CD8-positive, alpha-beta T cell (primary cell): ENCODE measurements at regions of chr15 and their contacts with region 1.

Region 1: DNA sequence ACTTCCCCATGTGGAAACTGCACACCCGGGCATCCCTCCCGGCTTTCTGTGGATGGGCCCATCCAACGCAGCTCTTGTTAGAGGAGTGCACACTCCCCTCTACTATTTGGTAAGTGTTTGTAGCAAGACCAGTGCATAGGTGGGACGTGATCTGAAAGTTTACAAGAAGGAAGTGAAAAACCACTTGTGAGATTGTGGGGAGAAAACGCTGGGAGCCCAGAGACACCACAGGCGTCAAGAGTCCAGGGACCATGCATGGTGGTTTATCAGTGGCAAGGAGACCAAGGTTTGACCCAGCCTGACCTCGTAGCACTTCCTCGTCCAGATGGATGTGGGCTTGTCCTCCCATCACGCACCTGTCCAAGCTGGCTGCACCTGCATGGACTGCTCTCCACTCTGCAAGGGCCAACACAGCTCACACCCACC is 51.6 kb downstream of the ATP10A start:
- DNase-seq: peak in 3 of 9 experiments; percentile 30 to 64 (median 44)
- ATAC-seq: peak; percentile 32
- H3K4me3 ChIP-seq: peak overlapping the region; percentile 13 to 27
- H3K4me3 Mint-ChIP-seq: peak overlapping the region; percentile 63
- H3K27ac ChIP-seq: peak overlapping the region in 1 of 2 experiments; percentile 39
- H3K27ac Mint-ChIP-seq: peak overlapping the region; percentile 77
- H3K4me1 ChIP-seq: peaks cover 52% of the 10 kb centered on the region
- H3K4me1 Mint-ChIP-seq: peaks cover 62% of the 10 kb centered on the region
- H3K27me3 ChIP-seq: no peaks in the 10 kb centered on the region
- H3K27me3 Mint-ChIP-seq: no peaks in the 10 kb centered on the region
- CTCF ChIP-seq: no peak

Region 2: DNA sequence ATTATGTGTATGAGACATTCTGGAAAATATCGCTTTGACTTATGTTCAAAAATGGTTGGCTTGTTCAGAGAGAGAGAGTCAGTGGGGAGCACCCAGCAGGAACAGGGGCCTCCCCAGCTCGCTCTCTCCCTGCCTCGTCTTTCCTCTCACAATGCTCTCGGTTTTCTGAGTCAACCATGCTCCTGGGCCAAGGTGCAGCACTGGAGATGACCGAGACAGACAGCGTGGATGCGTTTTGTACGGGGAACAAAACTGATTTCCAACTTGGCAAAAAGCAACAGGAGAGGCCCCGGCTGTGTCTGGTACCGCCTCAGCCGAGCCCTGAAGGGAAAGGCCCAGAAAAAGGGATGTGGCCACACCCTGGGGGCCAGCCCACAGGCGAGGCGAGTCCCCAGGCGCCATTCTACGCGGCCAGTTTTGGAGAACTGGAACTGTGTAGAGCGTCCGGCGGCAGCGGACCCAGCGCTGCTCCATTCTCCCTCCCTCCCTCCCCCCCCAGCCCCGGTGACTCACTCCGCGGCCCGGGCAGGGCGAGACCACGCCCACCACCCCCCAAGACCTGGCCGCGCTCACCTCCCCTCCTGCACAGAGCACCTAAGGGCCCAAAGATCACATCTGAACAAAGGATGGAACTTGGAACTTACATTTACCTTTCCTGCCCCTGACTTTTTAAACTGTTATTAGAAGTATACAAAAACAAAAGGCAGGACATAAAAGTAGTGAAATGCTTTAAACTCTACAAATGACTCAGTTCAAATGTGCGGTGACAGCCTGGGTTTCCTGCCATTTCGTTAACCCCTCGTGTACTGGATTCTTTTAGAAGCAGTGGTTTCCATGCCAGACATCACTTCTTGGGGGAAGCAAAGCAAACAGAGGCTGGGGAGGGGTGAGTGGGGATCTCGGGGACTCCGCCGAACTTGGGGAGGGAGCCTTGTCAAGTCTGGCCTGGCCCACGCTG is 38.9 kb after region 1 on chr15:
- CTCF ChIA-PET with region 1: no interaction called
- POLR2A ChIA-PET with region 1: interaction called, 3 read pairs
- intact Hi-C with region 1: loop called (anchors 5 kb)
- DNase-seq: peak in 8 of 9 experiments; percentile 63 to 86 (median 74)
- ATAC-seq: peak; percentile 54
- H3K4me3 ChIP-seq: peak overlapping the region; percentile 45 to 53
- H3K4me3 Mint-ChIP-seq: peak overlapping the region; percentile 91
- H3K27ac ChIP-seq: peak overlapping the region; percentile 72 to 88
- H3K27ac Mint-ChIP-seq: peak overlapping the region; percentile 98
- H3K4me1 ChIP-seq: peaks cover 80% of the 10 kb centered on the region
- H3K4me1 Mint-ChIP-seq: peaks cover 86% of the 10 kb centered on the region
- H3K27me3 ChIP-seq: no peaks in the 10 kb centered on the region
- H3K27me3 Mint-ChIP-seq: no peaks in the 10 kb centered on the region
- CTCF ChIP-seq: no peak

Region 3: GRCh38 chr15:26294059-26294689 is 482.7 kb after region 1 on chr15:
- CTCF ChIA-PET with region 1: no interaction called
- POLR2A ChIA-PET with region 1: no interaction called
- intact Hi-C with region 1: no loop called
- DNase-seq: no peak
- ATAC-seq: no peak
- H3K4me3 ChIP-seq: no peak overlapping the region
- H3K4me3 Mint-ChIP-seq: no peak overlapping the region
- H3K27ac ChIP-seq: no peak overlapping the region
- H3K27ac Mint-ChIP-seq: no peak overlapping the region
- H3K4me1 ChIP-seq: no peaks in the 10 kb centered on the region
- H3K4me1 Mint-ChIP-seq: no peaks in the 10 kb centered on the region
- H3K27me3 ChIP-seq: no peaks in the 10 kb centered on the region
- H3K27me3 Mint-ChIP-seq: no peaks in the 10 kb centered on the region
- CTCF ChIP-seq: no peak